ENCODE measurements at regions of chr15 and their contacts with region 1.

Region 1: DNA sequence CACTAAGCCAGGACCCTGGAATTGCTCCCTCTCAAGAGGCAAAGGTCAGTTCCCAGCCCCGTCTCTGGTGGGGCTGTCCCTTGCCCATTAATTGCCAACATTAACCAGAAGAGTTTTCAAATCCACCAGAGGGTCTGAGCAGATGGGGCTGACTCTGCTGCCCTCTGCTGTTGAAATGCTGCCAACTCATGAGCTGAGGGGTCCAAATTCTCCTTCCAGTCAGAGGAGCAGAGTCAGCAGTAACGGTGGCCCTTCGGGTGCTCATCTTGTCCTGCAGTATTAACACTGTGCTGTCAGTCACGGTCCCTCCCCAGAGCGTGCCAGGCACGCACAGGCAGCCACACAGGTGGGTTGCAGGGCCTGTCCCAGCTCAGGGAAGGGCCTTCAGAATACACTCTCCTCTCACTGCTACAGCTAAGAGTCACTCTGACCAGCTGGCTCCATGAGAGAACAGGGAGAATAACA is 10.7 kb upstream of the SPTBN5 start:
- DNase-seq: peak; percentile 63
- H3K4me3 ChIP-seq: no peak overlapping the region
- H3K27ac ChIP-seq: peak overlapping the region in 1 of 4 donors; percentile 20
- H3K4me1 ChIP-seq: no peaks in the 10 kb centered on the region
- H3K27me3 ChIP-seq: no peaks in the 10 kb centered on the region
- CTCF ChIP-seq: peak; percentile 72 to 82 (median 73)
- EP300 ChIP-seq: no peak
- POLR2A ChIP-seq: no peak

Region 2: DNA sequence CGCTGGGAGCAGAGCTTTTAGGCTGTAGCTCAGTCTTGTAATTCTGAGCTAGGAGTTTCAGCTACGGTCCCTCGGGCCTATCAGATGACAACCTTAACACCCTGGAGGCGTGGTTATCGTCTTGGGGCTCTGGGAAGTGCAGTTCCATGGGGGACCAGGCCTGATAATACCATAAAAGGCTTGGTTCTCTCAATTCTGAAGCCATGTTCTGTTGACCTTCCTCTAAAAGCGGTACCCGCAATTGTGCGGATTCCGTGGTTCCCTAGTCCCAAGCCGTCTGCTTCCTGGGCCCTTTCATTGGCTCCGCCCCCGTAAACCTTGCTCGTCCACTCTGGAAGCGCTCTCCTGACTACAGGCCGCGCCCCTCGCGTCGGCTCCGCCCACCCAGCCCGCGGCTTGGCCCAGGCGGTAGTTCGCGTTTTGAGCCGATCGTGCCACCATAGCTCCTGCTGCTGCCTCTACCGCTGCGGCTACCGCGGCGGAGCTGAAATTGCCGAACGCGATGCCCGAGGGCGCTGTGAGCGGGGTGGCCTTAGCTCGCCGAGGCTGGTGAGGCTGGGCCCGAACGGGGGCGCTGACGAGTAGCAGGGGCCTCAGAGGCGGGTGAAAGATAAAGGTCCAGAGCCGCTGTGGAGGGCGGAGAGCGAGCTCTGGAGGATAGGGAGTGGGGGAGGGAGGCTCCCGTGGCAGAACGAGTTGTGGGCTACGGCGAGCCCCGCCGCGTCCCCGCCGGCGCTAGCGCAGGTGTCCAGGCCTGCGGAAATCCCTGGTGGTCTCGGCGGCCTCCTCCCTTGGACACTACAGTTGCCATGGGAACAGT is 130.3 kb before region 1 on chr15 and contains the start of gene MAPKBP1:
- in situ Hi-C with region 1: loop called in 1 of 4 experiments (anchors 25 kb)
- intact Hi-C with region 1: no loop called
- DNase-seq: peak; percentile 98
- H3K4me3 ChIP-seq: peak within 1 kb of the TSS; percentile 55 to 92 (median 69)
- H3K27ac ChIP-seq: peak within 1 kb of the TSS; percentile 88 to 93 (median 92)
- H3K4me1 ChIP-seq: peaks cover 21 to 38% (median 27%) of the 10 kb centered on the region in 4 donors
- H3K27me3 ChIP-seq: no peaks in the 10 kb centered on the region
- CTCF ChIP-seq: peak; percentile 51 to 80 (median 52)
- EP300 ChIP-seq: no peak
- POLR2A ChIP-seq: peak; percentile 51
- total RNA-seq, gene MAPKBP1: 16.0 to 36.4 (median 16.8) TPM

Region 3: GRCh38 chr15:41820791-41821423 is 83.7 kb before region 1 on chr15:
- in situ Hi-C with region 1: no loop called
- intact Hi-C with region 1: no loop called
- DNase-seq: no peak
- H3K4me3 ChIP-seq: no peak overlapping the region
- H3K27ac ChIP-seq: no peak overlapping the region
- H3K4me1 ChIP-seq: no peaks in the 10 kb centered on the region
- H3K27me3 ChIP-seq: no peaks in the 10 kb centered on the region
- CTCF ChIP-seq: no peak
- EP300 ChIP-seq: no peak
- POLR2A ChIP-seq: no peak

Region 4: GRCh38 chr15:41972253-41973242 is 68.0 kb after region 1 on chr15 and contains the start of gene EHD4:
- in situ Hi-C with region 1: no loop called
- intact Hi-C with region 1: no loop called
- DNase-seq: peak; percentile 99
- H3K4me3 ChIP-seq: peak within 1 kb of the TSS; percentile 67 to 94 (median 76)
- H3K27ac ChIP-seq: peak within 1 kb of the TSS; percentile 82 to 96 (median 92)
- H3K4me1 ChIP-seq: peaks cover 0 to 57% (median 35%) of the 10 kb centered on the region in 4 donors
- H3K27me3 ChIP-seq: no peaks in the 10 kb centered on the region
- CTCF ChIP-seq: peak in 3 of 5 experiments; percentile 28 to 47 (median 39)
- EP300 ChIP-seq: no peak
- POLR2A ChIP-seq: peak; percentile 92
- total RNA-seq, gene EHD4: 16.9 to 55.4 (median 35.5) TPM

Region 5: DNA sequence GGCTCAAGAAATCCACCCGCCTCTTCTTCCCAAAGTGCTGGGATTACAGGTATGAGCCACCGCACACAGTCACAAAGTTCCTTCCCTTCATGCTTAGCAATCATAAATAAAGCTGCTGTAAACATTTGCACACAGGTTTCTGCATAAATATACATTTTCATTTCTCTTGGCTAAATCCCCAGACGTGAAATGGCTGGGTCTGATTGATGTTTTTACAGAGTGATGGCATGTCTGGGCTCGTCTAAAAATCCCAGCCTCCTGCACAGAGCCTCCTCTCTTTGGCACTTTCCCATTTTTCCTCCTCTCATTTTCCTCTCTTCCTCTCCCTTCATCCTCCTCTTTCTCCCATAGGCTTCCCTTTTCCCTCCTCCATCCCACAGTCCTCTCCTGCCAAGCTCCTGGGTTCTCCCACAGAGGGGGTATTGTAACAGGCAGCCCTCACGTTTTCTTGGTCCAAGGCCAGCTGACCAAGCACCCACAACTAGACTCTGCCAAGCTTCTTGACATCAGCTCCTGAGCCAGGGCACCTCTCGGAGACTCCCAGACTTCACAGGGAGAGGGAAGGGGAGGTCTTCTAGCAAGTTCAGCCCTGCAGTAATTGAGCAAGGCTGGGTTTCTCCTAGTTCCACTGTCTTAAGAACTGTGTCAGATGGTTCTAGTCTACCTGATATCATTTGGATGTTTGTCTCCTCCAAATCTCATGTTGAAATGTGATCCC is 126.8 kb after region 1 on chr15:
- in situ Hi-C with region 1: no loop called
- intact Hi-C with region 1: no loop called
- DNase-seq: no peak
- H3K4me3 ChIP-seq: no peak overlapping the region
- H3K27ac ChIP-seq: no peak overlapping the region
- H3K4me1 ChIP-seq: peaks cover 6 to 18% (median 8%) of the 10 kb centered on the region in 4 donors
- H3K27me3 ChIP-seq: no peaks in the 10 kb centered on the region
- CTCF ChIP-seq: no peak
- EP300 ChIP-seq: no peak
- POLR2A ChIP-seq: no peak